A549 (cell line): ENCODE measurements at regions of chr1 and their contacts with region 1.

Region 1: DNA sequence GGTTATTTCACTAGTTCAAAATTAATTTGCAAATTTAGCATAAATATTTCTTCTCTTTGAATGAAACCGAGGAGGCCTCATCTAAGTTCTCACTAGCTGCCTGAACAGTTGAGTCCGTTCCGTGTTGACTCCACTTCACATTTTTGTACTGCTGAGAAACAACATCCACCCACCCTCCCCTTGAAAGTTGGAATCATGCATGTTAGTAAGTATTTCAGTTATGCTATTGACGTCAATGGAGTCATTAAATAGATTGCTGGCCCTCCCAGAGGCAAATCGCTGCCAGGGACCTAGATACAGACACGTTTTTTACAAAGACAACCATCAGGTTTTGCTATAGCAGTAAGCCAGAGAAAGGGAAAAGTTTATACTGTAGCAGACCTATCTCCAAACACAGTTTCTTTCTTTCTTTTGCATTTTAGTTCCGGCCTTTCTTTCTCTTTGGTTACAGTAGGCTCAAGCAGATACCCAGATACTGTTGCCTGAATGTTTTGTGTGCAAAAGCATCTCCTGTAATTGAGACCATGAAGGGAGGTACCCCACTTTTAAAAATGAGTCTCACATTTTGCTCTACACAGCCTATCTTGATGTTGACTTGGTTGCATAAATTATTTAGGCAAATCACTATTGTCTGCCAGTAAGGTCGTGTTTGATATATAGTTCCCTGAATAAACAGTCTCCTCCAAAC is 262.6 kb upstream of the SGIP1 start:
- DNase-seq: peak; percentile 78 to 97
- ATAC-seq: peak; percentile 90 to 91
- H3K4me3 ChIP-seq: no peak overlapping the region
- H3K27ac ChIP-seq: peak overlapping the region; percentile 96 to 98
- H3K4me1 ChIP-seq: peaks cover 79% of the 10 kb centered on the region
- CTCF ChIP-seq: no peak
- EP300 ChIP-seq: peak; percentile 95
- POLR2A ChIP-seq: no peak
- RAD21 ChIP-seq: peak; percentile 21 to 65; a peak in 4 of 5 replicates

Region 2: GRCh38 chr1:66197785-66198184 is 73.6 kb before region 1 on chr1:
- CTCF ChIA-PET with region 1: no interaction called
- POLR2A ChIA-PET with region 1: no interaction called
- DNase-seq: no peak
- ATAC-seq: no peak
- H3K4me3 ChIP-seq: no peak overlapping the region
- H3K27ac ChIP-seq: peak overlapping the region in 1 of 2 experiments; percentile 48; a peak in 3 of 6 replicates
- H3K4me1 ChIP-seq: peaks cover 25% of the 10 kb centered on the region; the same call in 2 of the 3 replicates
- CTCF ChIP-seq: no peak
- EP300 ChIP-seq: no peak
- POLR2A ChIP-seq: no peak
- RAD21 ChIP-seq: no peak

Region 3: DNA sequence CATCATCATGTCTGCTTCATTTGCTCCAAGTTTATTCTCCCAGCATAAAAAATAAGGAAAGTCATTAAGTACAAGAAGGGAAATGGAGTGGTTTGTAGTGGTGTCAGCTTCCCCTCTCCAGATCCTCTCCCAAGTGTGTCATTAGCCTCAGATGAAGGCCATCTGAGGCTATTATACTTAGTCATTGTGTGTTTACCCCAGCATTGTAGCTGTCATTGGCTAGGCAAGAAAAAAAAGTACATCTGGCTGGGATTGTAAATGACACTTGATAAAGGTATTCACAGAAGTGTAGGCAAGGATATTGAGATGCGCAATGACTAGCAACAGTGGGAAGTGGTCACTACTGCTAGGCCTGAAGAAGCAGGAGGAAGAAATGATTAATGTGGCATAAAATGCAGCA is 54.3 kb before region 1 on chr1:
- CTCF ChIA-PET with region 1: no interaction called
- POLR2A ChIA-PET with region 1: no interaction called
- DNase-seq: peak; percentile 26 to 64
- ATAC-seq: peak; percentile 77 to 85
- H3K4me3 ChIP-seq: no peak overlapping the region
- H3K27ac ChIP-seq: peak overlapping the region; percentile 35 to 71; a peak in 4 of 6 replicates
- H3K4me1 ChIP-seq: peaks cover 50% of the 10 kb centered on the region
- CTCF ChIP-seq: no peak
- EP300 ChIP-seq: no peak
- POLR2A ChIP-seq: no peak
- RAD21 ChIP-seq: no peak

Region 4: DNA sequence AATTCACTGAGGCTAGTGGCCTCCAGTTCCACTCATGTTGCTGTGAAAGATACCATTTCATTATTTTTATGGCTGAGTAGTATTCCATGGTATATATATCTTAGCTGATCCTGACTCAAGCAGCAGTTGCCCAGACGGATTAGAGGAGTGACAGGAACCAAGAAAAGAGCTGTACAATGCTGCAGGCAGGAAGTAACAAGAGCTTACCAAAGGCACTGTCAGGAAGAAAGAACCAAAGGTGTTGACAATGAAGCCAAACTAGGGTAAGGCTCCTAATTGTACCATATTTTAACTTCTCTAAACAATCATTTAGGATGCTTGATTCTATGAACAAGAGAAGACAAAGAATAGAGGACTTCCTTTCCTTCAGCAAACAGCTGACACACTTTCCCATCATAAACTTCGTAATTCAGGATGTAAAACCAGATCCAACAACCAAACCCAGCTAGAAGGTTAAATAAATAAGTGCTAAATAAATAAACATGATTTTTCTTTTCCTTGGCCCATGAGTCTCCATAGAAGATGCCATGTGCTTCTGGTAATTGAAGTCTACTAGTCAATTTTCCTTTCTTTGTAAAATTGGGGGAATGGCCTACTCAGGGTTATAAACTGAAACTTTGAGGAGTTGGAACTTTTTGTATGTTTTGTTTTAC is 14.4 kb after region 1 on chr1:
- CTCF ChIA-PET with region 1: interaction called, 12 read pairs
- POLR2A ChIA-PET with region 1: no interaction called
- DNase-seq: peak in 1 of 2 experiments; percentile 64
- ATAC-seq: peak; percentile 33 to 37; a peak in 4 of 6 replicates
- H3K4me3 ChIP-seq: no peak overlapping the region
- H3K27ac ChIP-seq: peak overlapping the region; percentile 78 to 81
- H3K4me1 ChIP-seq: peaks cover 62% of the 10 kb centered on the region
- CTCF ChIP-seq: no peak
- EP300 ChIP-seq: no peak
- POLR2A ChIP-seq: no peak
- RAD21 ChIP-seq: no peak

Region 5: GRCh38 chr1:66331657-66332547 is 60.5 kb after region 1 on chr1:
- CTCF ChIA-PET with region 1: interaction called, 4 read pairs
- POLR2A ChIA-PET with region 1: interaction called, 27 read pairs
- DNase-seq: peak; percentile 78 to 87
- ATAC-seq: peak; percentile 92 to 96
- H3K4me3 ChIP-seq: peak overlapping the region; percentile 88
- H3K27ac ChIP-seq: peak overlapping the region; percentile 92 to 95
- H3K4me1 ChIP-seq: peaks cover 25% of the 10 kb centered on the region
- CTCF ChIP-seq: no peak
- EP300 ChIP-seq: no peak
- POLR2A ChIP-seq: peak; percentile 80
- RAD21 ChIP-seq: peak in 1 of 2 experiments; percentile 28; a peak in 1 of 5 replicates